RWPE1 (cell line): ENCODE measurements at regions of chr2 and their contacts with region 1.

Region 1: GRCh38 chr2:43086451-43087221 is 139.8 kb downstream of the ZFP36L2 start:
- DNase-seq: peak; percentile 92
- H3K27ac ChIP-seq: peak overlapping the region; percentile 100
- CTCF ChIP-seq: no peak

Region 2: DNA sequence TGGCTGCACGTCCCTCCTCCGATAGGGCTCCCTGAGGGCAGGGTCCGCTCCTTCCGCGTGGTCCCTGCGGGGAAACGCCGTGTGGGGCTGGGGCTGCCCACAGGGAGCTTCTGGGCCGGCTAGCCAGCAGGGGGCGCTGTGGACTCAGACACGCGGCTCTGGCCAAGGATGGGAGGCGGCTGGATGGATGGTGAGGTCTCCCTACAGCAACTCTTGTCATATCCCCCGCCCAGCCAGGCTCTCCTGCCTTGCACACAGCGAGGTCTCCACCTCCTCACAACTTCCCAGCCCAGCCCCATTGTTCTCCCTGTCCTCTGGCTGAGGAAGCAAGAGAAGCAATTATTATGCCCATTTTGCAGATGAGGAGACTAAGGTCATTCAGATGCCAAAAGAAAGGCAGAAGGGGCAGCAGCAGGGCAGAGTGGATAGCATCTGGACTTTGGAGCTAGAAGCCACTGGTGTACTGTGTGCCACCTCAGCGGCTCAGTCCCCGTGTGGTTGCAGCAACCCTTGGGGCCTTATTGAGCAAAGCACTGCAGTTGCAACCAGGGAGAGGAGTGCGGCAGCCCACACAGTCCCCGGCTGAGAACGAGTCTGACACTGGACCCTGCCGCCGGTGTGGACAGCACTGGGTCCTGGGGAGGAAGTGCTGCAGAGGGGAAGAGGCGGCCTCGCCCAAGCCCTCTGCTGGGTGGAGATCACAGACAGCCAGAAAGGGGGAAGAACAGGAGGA is 40.7 kb after region 1 on chr2:
- CTCF ChIA-PET with region 1: interaction called, 10 read pairs
- POLR2A ChIA-PET with region 1: no interaction called
- DNase-seq: no peak
- H3K27ac ChIP-seq: peak overlapping the region; percentile 98
- CTCF ChIP-seq: peak; percentile 58